Endothelial cell of umbilical vein (primary cell): ENCODE measurements at regions of chr2 and their contacts with region 1.

Region 1: GRCh38 chr2:36376319-36376765 is 20.8 kb downstream of the CRIM1 start:
- DNase-seq: peak; percentile 65
- H3K4me3 ChIP-seq: no peak overlapping the region
- H3K27ac ChIP-seq: peak overlapping the region; percentile 44
- H3K4me1 ChIP-seq: peaks cover 98% of the 10 kb centered on the region
- H3K27me3 ChIP-seq: no peaks in the 10 kb centered on the region
- CTCF ChIP-seq: no peak
- POLR2A ChIP-seq: no peak

Region 2: DNA sequence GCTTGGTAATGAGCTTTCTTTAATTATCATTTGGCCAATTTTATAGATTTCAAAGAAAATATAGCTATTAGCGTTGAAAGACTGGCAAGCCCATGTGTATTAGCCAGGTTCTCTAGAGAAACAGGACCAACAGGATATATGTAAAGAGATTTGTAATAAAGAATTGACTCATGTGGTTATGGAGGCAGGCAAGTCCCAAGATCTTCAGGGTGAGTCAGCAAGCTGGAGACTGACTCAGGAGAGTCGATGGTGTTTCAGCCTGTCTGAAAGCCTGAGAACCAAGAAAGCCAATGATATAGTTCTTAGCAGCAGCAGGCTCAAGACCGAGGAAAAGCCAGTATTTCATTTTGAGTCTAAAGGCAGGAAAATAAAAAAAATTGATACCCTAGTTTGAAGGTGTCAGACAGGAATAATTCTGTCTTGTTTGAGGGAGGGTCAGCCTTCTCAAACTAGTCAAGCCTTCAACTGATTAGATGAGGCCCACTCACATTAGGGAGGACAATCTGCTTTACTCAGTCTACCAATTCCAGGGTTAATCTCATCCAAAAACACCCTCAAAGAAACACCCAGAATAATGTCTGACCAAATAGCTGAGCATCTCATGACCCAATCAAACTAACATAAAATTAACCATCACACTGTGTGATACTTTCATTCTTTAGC is 99.1 kb before region 1 on chr2:
- CTCF ChIA-PET with region 1: no interaction called
- POLR2A ChIA-PET with region 1: no interaction called
- dilution Hi-C with region 1: no loop called
- intact Hi-C with region 1: no loop called
- DNase-seq: peak; percentile 44
- H3K4me3 ChIP-seq: no peak overlapping the region
- H3K27ac ChIP-seq: no peak overlapping the region
- H3K4me1 ChIP-seq: no peaks in the 10 kb centered on the region
- H3K27me3 ChIP-seq: peaks cover 0 to under 1% of the 10 kb centered on the region in 2 experiments
- CTCF ChIP-seq: no peak
- POLR2A ChIP-seq: no peak

Region 3: GRCh38 chr2:36322108-36322507 is 54.2 kb before region 1 on chr2:
- CTCF ChIA-PET with region 1: no interaction called
- POLR2A ChIA-PET with region 1: no interaction called
- dilution Hi-C with region 1: no loop called
- intact Hi-C with region 1: no loop called
- DNase-seq: peak; percentile 70
- H3K4me3 ChIP-seq: no peak overlapping the region
- H3K27ac ChIP-seq: no peak overlapping the region
- H3K4me1 ChIP-seq: no peaks in the 10 kb centered on the region
- H3K27me3 ChIP-seq: peaks cover 3% of the 10 kb centered on the region in 2 experiments
- CTCF ChIP-seq: peak; percentile 28 to 60
- POLR2A ChIP-seq: no peak

Region 4: DNA sequence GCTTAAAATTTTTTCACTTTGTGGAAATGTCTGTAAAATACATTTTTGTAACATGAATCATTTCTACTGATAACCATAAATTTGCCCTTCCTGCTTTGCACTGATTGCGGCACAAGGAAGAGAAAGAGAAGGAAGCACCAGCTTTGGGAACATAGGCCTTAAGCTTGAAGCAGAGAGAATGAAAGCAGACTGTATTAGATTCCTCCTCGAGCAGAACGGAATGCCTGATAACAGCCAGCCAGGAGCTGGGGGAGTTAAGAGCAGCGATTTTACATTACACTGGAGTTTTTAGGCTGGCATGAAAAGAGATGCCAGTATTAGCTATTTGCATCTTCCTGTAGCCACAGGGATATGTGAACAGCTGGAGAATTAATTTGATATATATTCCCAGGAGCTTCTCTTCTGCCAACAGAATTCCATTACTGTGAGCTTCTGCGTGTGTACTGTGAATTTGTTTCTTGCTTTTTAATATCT is 12.8 kb after region 1 on chr2:
- CTCF ChIA-PET with region 1: interaction called, 7 read pairs
- POLR2A ChIA-PET with region 1: interaction called, 3 read pairs
- dilution Hi-C with region 1: no loop called
- intact Hi-C with region 1: loop called (anchors 1 kb)
- DNase-seq: peak; percentile 87
- H3K4me3 ChIP-seq: no peak overlapping the region
- H3K27ac ChIP-seq: peak overlapping the region; percentile 98
- H3K4me1 ChIP-seq: peaks cover 87% of the 10 kb centered on the region
- H3K27me3 ChIP-seq: no peaks in the 10 kb centered on the region
- CTCF ChIP-seq: no peak
- POLR2A ChIP-seq: no peak

Region 5: GRCh38 chr2:36413218-36413617 is 36.9 kb after region 1 on chr2:
- CTCF ChIA-PET with region 1: interaction called, 6 read pairs
- POLR2A ChIA-PET with region 1: interaction called, 4 read pairs
- dilution Hi-C with region 1: no loop called
- intact Hi-C with region 1: loop called (anchors 1 kb)
- DNase-seq: peak; percentile 88
- H3K4me3 ChIP-seq: peak overlapping the region in 1 of 3 experiments; percentile 8
- H3K27ac ChIP-seq: peak overlapping the region; percentile 92
- H3K4me1 ChIP-seq: peaks cover 88% of the 10 kb centered on the region
- H3K27me3 ChIP-seq: no peaks in the 10 kb centered on the region
- CTCF ChIP-seq: no peak
- POLR2A ChIP-seq: peak; percentile 78

Region 6: GRCh38 chr2:36478332-36478738 is 102.0 kb after region 1 on chr2:
- CTCF ChIA-PET with region 1: no interaction called
- POLR2A ChIA-PET with region 1: no interaction called
- dilution Hi-C with region 1: no loop called
- intact Hi-C with region 1: loop called (anchors 1 kb)
- DNase-seq: peak; percentile 96
- H3K4me3 ChIP-seq: no peak overlapping the region
- H3K27ac ChIP-seq: peak overlapping the region; percentile 82
- H3K4me1 ChIP-seq: peaks cover 73% of the 10 kb centered on the region
- H3K27me3 ChIP-seq: no peaks in the 10 kb centered on the region
- CTCF ChIP-seq: no peak
- POLR2A ChIP-seq: no peak

Region 7: DNA sequence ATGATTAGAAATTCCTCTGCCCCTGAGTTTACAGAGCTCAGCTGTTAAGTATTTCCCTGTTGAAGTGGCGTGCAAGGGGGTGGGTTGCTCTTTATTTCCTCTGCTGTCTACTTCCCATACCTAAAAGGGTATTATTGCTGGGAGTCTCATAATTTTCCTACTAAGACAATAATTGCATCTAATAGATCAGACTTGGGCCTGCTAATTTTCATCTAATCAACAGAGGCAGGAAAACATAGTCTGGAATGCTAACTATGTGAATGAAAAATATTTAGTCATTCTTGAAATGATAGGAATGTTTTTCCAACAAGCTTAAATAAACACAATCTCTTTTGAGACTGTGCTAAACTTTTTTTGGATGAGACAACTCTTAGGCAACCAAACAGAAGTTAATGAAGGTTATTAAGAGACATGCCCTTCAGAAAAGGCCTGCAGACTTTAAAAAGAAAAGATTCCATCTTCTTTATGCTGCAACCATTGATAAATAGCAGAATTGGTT is 110.3 kb after region 1 on chr2:
- CTCF ChIA-PET with region 1: no interaction called
- POLR2A ChIA-PET with region 1: interaction called, 3 read pairs
- dilution Hi-C with region 1: no loop called
- intact Hi-C with region 1: loop called (anchors 1 kb)
- DNase-seq: peak; percentile 90
- H3K4me3 ChIP-seq: no peak overlapping the region
- H3K27ac ChIP-seq: peak overlapping the region; percentile 93
- H3K4me1 ChIP-seq: peaks cover 93% of the 10 kb centered on the region
- H3K27me3 ChIP-seq: no peaks in the 10 kb centered on the region
- CTCF ChIP-seq: no peak
- POLR2A ChIP-seq: peak; percentile 43

Region 8: DNA sequence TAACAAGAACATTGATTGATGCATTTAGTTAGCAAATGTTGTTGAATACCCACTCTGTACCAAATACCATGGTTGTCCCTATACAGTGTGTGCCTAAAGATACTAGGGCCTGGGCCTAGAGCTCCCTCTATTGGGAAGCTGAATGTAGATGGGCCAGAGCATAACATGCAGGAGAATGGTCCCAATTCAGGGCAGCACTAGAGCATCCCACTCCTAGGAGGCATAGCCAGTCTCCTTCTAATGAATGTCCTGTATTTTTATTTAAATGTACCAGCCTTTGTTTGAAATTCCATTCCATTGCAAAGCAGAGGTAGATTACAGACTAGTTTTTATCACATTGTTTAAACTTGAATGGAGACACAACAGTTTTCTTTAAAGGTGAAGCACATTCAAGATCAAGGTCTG is 131.1 kb after region 1 on chr2:
- CTCF ChIA-PET with region 1: interaction called, 3 read pairs
- POLR2A ChIA-PET with region 1: no interaction called
- dilution Hi-C with region 1: no loop called
- intact Hi-C with region 1: loop called (anchors 5 kb)
- DNase-seq: peak; percentile 64
- H3K4me3 ChIP-seq: no peak overlapping the region
- H3K27ac ChIP-seq: no peak overlapping the region
- H3K4me1 ChIP-seq: no peaks in the 10 kb centered on the region
- H3K27me3 ChIP-seq: no peaks in the 10 kb centered on the region
- CTCF ChIP-seq: peak; percentile 68 to 75
- POLR2A ChIP-seq: no peak

Region 9: GRCh38 chr2:37389989-37390765 is 1013.8 kb after region 1 on chr2:
- CTCF ChIA-PET with region 1: no interaction called
- POLR2A ChIA-PET with region 1: no interaction called
- dilution Hi-C with region 1: no loop called
- intact Hi-C with region 1: no loop called
- DNase-seq: peak; percentile 88
- H3K4me3 ChIP-seq: no peak overlapping the region
- H3K27ac ChIP-seq: peak overlapping the region; percentile 78
- H3K4me1 ChIP-seq: peaks cover 28% of the 10 kb centered on the region
- H3K27me3 ChIP-seq: no peaks in the 10 kb centered on the region
- CTCF ChIP-seq: no peak
- POLR2A ChIP-seq: peak; percentile 82